Heart left ventricle (tissue), 16 donors: ENCODE measurements at regions of chr2 and their contacts with region 1.

Region 1: DNA sequence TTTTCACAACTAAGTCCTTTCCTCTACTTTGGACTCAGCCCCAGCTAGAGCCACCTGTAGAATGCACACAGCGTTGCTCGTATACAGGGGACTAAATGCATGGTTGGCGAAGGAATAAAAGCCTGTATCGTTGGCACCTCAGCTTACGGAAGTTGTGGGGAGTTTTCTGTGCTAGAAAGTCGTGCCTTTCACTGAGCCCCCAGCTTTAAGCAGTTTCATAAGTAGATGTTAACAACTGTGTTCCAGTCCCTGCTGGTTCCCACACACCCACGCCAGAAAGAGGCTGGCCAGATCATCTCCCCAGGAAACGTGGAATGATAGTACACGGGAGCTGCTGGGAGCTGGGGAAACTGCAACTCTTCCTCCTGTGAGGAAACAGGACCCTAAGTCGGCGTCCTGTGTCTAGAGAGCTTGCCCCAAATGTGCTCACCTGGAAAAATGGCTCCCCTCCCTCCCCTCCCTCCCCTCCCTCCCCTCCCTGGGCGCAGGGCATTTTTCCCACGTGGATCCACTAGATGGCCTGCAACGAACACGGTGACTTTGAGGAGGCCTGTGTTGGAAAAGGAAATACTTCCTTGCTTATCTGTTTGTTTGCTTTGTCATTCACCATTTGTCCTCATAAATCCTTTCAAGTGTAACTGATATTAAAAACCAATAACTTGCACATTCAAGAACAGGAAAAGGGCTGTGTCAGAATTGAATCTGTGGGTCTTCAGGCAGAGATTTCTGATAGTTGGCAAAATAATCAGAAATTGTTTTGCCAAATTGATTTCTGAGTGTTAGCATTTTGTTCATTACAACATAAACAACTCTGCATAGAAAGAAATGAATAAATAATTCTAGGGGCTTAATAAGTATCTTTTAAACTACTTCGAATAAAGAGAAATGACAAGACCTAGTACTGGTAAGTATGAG is 43.9 kb upstream of the RFX8 start:
- DNase-seq: peak in 4 of 5 donors; percentile 47 to 72 (median 56)
- ATAC-seq: peak; percentile 63 to 86 (median 75)
- H3K4me3 ChIP-seq: peak overlapping the region in 3 of 12 donors; percentile 19 to 32 (median 25)
- H3K27ac ChIP-seq: peak overlapping the region in 7 of 12 donors; percentile 0 to 67 (median 32)
- H3K4me1 ChIP-seq: peaks cover 0 to 48% (median 20%) of the 10 kb centered on the region in 12 donors
- H3K27me3 ChIP-seq: no peaks in the 10 kb centered on the region
- CTCF ChIP-seq: peak in 10 of 12 donors; percentile 31 to 66 (median 52)
- POLR2A ChIP-seq: no peak

Region 2: DNA sequence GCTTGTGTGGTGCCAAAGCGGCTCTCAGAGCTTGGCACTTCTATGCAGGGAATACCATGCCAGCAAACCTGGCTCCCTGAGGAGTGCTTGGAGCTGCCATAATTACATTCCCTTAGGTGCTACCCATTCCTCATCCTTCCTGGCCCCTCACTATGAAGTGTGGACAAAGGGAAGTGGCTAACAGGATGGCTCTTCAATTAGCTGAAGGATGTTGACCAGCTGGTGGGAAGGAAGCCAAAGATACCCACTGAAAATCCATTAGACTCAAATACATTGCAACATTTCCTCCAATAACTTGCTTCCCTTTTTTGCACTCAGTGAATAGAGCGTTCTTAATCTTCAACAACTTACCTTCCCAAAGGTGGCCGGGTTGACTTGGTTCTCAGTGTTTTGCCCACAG is 52.4 kb before region 1 on chr2:
- intact Hi-C with region 1: loop called in 1 of 10 experiments (anchors 5 kb)
- DNase-seq: no peak
- ATAC-seq: no peak
- H3K4me3 ChIP-seq: no peak overlapping the region
- H3K27ac ChIP-seq: no peak overlapping the region
- H3K4me1 ChIP-seq: peaks cover 0 to 39% (median 17%) of the 10 kb centered on the region in 12 donors
- H3K27me3 ChIP-seq: peaks cover 0 to 60% (median 0%) of the 10 kb centered on the region in 9 donors
- CTCF ChIP-seq: no peak
- POLR2A ChIP-seq: no peak

Region 3: DNA sequence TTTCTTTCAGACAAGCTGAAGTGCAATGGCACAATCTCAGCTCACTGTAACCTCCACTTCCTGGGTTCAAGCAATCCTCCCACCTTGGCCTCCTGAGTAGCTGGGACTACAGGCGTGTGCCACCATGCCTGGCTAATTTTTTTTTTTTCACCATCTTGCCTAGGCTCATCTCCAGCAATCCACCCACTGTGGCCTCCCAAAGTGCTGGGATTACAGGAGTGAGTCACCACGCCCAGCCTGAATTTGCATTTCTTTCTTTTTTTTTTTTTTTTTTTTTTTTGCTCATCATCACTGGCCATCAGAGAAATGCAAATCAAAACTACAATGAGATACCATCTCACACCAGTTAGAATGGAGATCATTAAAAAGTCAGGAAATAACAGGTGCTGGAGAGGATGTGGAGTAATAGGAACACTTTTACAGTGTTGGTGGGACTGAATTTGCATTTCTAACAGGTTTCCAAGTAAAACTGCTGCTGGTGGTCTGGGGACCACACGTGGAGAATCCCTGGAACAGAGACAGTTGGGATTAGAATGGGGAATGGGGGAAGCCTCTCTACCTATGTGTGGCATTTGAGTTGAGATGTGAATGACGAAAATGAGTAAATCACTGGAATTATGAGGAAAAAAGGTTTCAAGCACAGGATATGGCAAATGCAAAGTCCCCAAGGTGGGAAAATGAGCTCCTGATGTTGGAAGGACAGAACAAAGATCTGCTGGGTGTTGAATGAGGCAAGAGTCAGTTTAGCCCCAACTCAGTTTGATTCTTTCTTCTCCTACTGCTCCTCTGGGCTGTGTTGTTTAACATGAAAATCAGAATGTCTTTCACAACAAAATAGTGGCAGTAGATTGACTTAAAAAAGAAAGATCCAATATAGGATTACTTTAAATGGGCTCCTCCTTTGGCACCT is 89.8 kb after region 1 on chr2:
- intact Hi-C with region 1: no loop called
- DNase-seq: no peak
- ATAC-seq: no peak
- H3K4me3 ChIP-seq: no peak overlapping the region
- H3K27ac ChIP-seq: no peak overlapping the region
- H3K4me1 ChIP-seq: peaks cover 0 to 9% (median 0%) of the 10 kb centered on the region in 12 donors
- H3K27me3 ChIP-seq: peaks cover 0 to 18% (median 0%) of the 10 kb centered on the region in 9 donors
- CTCF ChIP-seq: no peak
- POLR2A ChIP-seq: no peak

Region 4: GRCh38 chr2:101655702-101656422 is 137.0 kb after region 1 on chr2:
- intact Hi-C with region 1: loop called in 1 of 10 experiments (anchors 10 kb)
- DNase-seq: no peak
- ATAC-seq: peak in 1 of 4 donors; percentile 15
- H3K4me3 ChIP-seq: no peak overlapping the region
- H3K27ac ChIP-seq: peak overlapping the region in 7 of 12 donors; percentile 8 to 75 (median 37)
- H3K4me1 ChIP-seq: peaks cover 0 to 28% (median 7%) of the 10 kb centered on the region in 12 donors
- H3K27me3 ChIP-seq: no peaks in the 10 kb centered on the region
- CTCF ChIP-seq: no peak
- POLR2A ChIP-seq: no peak

Region 5: DNA sequence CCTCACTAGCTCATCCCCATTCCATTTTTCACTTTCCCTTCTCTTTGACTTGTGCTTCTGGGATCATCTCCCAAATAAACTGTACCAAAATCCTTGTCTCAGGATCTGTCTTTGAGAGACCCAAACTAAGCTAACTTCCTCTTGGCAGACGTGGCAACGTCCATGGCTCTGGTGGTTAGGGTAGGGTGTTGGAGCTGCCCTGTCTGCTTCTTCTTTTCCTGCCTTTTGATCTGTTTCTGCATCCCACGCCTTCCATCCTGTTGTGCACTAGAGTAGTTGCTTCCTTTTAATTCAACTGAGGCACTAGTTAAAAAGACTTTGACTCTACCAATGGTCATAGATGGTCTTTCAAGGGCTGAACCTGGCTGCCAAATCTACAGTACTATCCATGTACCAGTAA is 173.2 kb after region 1 on chr2:
- intact Hi-C with region 1: loop called in 9 of 10 experiments (anchors 2 to 10 kb)
- DNase-seq: no peak
- ATAC-seq: no peak
- H3K4me3 ChIP-seq: no peak overlapping the region
- H3K27ac ChIP-seq: no peak overlapping the region
- H3K4me1 ChIP-seq: peaks cover 0 to 8% (median 3%) of the 10 kb centered on the region in 12 donors
- H3K27me3 ChIP-seq: no peaks in the 10 kb centered on the region
- CTCF ChIP-seq: no peak
- POLR2A ChIP-seq: no peak

Region 6: DNA sequence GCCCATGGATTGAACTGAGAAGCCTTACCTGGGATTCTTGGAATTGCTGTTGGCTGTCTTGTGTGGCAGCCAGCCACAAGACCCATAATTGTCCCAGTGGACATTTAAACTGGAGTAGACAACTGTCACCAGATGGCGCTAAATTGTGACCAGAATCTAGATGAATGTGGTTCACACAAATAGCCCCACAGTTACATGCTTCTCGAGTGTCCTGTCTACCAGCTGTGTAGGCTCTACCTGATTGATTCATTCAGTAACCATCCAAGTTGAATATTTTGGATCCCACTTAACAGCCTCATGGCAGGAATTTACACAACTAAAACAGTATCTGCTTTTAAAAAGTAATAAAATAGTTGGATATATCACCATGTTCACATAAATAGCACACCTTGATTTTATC is 251.9 kb after region 1 on chr2:
- intact Hi-C with region 1: loop called in 1 of 10 experiments (anchors 10 kb)
- DNase-seq: no peak
- ATAC-seq: peak; percentile 11 to 44 (median 40)
- H3K4me3 ChIP-seq: no peak overlapping the region
- H3K27ac ChIP-seq: peak overlapping the region in 5 of 12 donors; percentile 2 to 14 (median 4)
- H3K4me1 ChIP-seq: peaks cover 8 to 100% (median 88%) of the 10 kb centered on the region in 12 donors
- H3K27me3 ChIP-seq: no peaks in the 10 kb centered on the region
- CTCF ChIP-seq: peak in 9 of 12 donors; percentile 33 to 55 (median 39)
- POLR2A ChIP-seq: no peak

Region 7: GRCh38 chr2:101983928-101984327 is 465.1 kb after region 1 on chr2:
- intact Hi-C with region 1: loop called in 1 of 10 experiments (anchors 10 kb)
- DNase-seq: no peak
- ATAC-seq: peak in 3 of 4 donors; percentile 36 to 62 (median 59)
- H3K4me3 ChIP-seq: no peak overlapping the region
- H3K27ac ChIP-seq: no peak overlapping the region
- H3K4me1 ChIP-seq: peaks cover 0 to 6% (median 0%) of the 10 kb centered on the region in 12 donors
- H3K27me3 ChIP-seq: no peaks in the 10 kb centered on the region
- CTCF ChIP-seq: peak in 8 of 12 donors; percentile 8 to 44 (median 32)
- POLR2A ChIP-seq: no peak